ENCODE measurements at regions of chr11 and their contacts with region 1.

Region 1: GRCh38 chr11:121451986-121452608 is at the start of gene SORL1:
- DNase-seq: peak; percentile 61
- H3K4me3 Mint-ChIP-seq: peak within 1 kb of the TSS; percentile 94
- H3K27ac Mint-ChIP-seq: peak within 1 kb of the TSS; percentile 92
- H3K4me1 Mint-ChIP-seq: peaks cover 88% of the 10 kb centered on the region
- H3K27me3 Mint-ChIP-seq: no peaks in the 10 kb centered on the region
- total RNA-seq, gene SORL1: 19.2 and 20.9 TPM in 2 replicates

Region 2: GRCh38 chr11:121249039-121249663 is 202.9 kb before region 1 on chr11:
- intact Hi-C with region 1: loop called (anchors 2 kb)
- DNase-seq: no peak
- H3K4me3 Mint-ChIP-seq: no peak overlapping the region
- H3K27ac Mint-ChIP-seq: no peak overlapping the region
- H3K4me1 Mint-ChIP-seq: no peaks in the 10 kb centered on the region
- H3K27me3 Mint-ChIP-seq: peaks cover 5% of the 10 kb centered on the region

Region 3: GRCh38 chr11:121318848-121319834 is 133.0 kb before region 1 on chr11:
- intact Hi-C with region 1: loop called (anchors 2 kb)
- DNase-seq: no peak
- H3K4me3 Mint-ChIP-seq: no peak overlapping the region
- H3K27ac Mint-ChIP-seq: no peak overlapping the region
- H3K4me1 Mint-ChIP-seq: peaks cover 24% of the 10 kb centered on the region
- H3K27me3 Mint-ChIP-seq: peaks cover 5% of the 10 kb centered on the region

Region 4: GRCh38 chr11:121417055-121417551 is 35.0 kb before region 1 on chr11:
- intact Hi-C with region 1: loop called (anchors 2 kb)
- DNase-seq: peak; percentile 27
- H3K4me3 Mint-ChIP-seq: peak overlapping the region; percentile 12
- H3K27ac Mint-ChIP-seq: peak overlapping the region; percentile 40
- H3K4me1 Mint-ChIP-seq: peaks cover 65% of the 10 kb centered on the region
- H3K27me3 Mint-ChIP-seq: no peaks in the 10 kb centered on the region

Region 5: DNA sequence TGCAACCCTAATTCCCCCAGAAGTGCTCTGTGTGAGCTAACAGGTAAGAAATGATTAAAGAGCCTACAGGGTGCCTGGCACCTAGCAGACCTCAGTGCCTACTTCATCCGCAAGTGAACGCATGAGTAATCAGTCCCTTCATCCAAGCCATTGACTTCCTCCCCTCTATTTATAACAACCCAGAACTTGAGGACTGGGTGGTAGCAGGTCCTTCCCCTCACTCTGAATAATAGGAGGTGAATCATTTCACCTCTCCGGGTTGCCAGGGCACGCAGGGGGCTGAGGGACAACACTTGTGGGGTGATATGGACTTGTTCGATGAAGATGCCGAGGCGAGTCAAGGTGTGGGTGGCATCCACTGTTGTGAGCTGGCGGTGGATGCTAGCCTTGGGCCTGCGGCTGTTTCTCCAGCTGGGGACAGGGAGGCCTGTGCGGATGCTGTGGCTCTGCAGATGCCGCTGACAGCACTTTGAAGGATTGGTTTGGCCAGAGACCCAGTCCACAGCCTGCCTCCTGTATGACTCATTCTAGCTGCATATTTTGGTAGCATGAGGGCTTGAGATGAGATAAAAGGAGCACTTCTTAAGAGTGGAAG is 12.4 kb after region 1 on chr11:
- intact Hi-C with region 1: loop called (anchors 1 kb)
- DNase-seq: peak; percentile 66
- H3K4me3 Mint-ChIP-seq: peak overlapping the region; percentile 76
- H3K27ac Mint-ChIP-seq: peak overlapping the region; percentile 94
- H3K4me1 Mint-ChIP-seq: peaks cover 94% of the 10 kb centered on the region
- H3K27me3 Mint-ChIP-seq: peaks cover 2% of the 10 kb centered on the region

Region 6: DNA sequence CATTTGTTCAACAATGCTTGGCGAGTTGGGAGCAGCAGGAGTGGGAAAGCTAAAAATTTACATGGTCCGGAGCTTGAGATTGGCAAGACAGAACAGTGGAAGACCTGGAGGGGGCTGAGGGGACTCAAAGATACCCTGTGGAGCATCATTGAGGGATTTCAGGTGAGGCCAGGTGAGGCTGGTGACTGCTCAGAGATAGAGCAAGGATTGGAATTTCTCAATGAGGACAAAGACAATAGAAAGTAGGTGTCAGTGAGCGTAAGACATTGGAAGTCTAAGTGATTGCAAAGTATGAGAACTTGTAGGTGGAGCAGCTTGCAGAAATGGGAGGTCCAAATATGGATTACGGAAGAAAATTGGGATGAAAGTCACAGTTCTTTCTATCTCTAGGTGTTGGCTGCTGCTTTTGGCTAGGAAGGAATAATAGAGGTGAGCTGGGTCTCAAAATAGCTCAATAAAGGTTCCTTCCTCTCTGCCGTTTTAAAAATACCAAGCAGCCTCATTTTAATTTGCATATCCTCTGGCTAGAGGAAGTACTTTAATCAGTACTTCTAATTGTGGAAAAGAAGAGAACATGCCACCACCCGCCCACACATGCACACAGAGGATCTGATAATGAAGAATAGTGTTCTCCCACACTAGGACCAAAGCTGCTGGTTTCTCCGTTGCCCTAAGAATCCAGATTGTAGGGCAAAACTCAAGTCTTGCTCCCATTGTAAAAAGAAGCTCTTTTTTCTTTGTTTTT is 42.4 kb after region 1 on chr11:
- intact Hi-C with region 1: loop called (anchors 2 kb)
- DNase-seq: no peak
- H3K4me3 Mint-ChIP-seq: peak overlapping the region; percentile 39
- H3K27ac Mint-ChIP-seq: peak overlapping the region; percentile 66
- H3K4me1 Mint-ChIP-seq: peaks cover 31% of the 10 kb centered on the region
- H3K27me3 Mint-ChIP-seq: no peaks in the 10 kb centered on the region

Region 7: GRCh38 chr11:121591405-121592033 is 139.4 kb after region 1 on chr11:
- intact Hi-C with region 1: loop called (anchors 1 kb)
- DNase-seq: peak; percentile 65
- H3K4me3 Mint-ChIP-seq: no peak overlapping the region
- H3K27ac Mint-ChIP-seq: peak overlapping the region; percentile 35
- H3K4me1 Mint-ChIP-seq: peaks cover 23% of the 10 kb centered on the region
- H3K27me3 Mint-ChIP-seq: no peaks in the 10 kb centered on the region

Region 8: GRCh38 chr11:121634889-121635288 is 182.8 kb after region 1 on chr11:
- intact Hi-C with region 1: no loop called
- DNase-seq: no peak
- H3K4me3 Mint-ChIP-seq: no peak overlapping the region
- H3K27ac Mint-ChIP-seq: no peak overlapping the region
- H3K4me1 Mint-ChIP-seq: peaks cover 5% of the 10 kb centered on the region
- H3K27me3 Mint-ChIP-seq: no peaks in the 10 kb centered on the region